CD14-positive monocyte (primary cell): ENCODE measurements at regions of chr2 and their contacts with region 1.

Region 1: GRCh38 chr2:55168221-55169154 is 63.6 kb downstream of the CLHC1 start:
- DNase-seq: peak; percentile 53 to 75 (median 68)
- H3K4me3 ChIP-seq: no peak overlapping the region
- H3K4me3 Mint-ChIP-seq: no peak overlapping the region
- H3K27ac ChIP-seq: peak overlapping the region in 1 of 2 donors; percentile 27
- H3K27ac Mint-ChIP-seq: no peak overlapping the region
- H3K4me1 ChIP-seq: peaks cover 8 to 10% of the 10 kb centered on the region in 2 donors
- H3K4me1 Mint-ChIP-seq: peaks cover 20% of the 10 kb centered on the region
- H3K27me3 ChIP-seq: no peaks in the 10 kb centered on the region
- H3K27me3 Mint-ChIP-seq: no peaks in the 10 kb centered on the region
- CTCF ChIP-seq: peak; percentile 81

Region 2: DNA sequence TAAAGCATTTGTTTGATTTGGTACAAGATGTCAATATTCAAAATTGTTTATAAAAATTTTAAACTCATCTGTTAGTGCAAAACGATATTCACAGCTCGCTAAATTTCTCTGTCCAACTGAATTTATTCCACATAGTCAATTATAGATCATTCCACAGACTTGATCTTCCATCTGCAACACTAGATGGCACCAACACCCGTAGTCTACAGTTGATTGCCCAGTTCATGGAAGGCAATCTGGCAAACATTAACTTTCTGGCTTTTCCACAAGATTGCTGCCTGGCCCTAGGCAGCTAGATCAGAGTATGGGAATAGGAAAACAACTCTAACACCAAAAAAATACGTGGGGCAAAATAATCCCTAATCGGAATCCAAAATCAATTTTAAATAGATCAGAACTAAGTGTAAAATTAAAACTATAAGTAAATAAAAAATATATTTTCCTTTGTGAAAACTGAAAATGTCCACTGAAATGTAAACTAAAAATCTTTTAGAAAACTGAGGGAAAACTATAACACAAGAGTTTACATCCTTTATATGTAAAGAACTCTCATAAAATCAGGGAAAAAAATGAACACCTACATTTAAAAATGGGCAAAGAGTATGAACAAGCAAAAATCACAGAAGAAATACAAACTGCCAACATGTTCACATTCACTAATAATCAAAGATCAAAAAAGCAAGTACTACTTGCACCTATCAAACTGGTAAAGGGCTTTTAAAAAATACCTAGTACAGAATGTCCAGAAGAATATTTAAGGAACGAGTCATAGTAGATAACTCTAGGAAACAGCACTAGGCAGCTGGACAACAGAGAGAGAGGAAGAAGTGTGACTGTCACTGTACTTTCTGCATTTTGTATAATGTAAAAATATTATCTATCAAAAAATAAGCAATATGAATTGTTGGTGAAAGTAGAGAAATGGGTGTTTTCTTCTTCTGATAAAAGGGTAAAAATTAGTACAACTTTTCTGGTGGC is 153.2 kb before region 1 on chr2:
- intact Hi-C with region 1: loop called in 1 of 2 experiments (anchors 5 kb)
- DNase-seq: peak; percentile 30 to 56 (median 54)
- H3K4me3 ChIP-seq: no peak overlapping the region
- H3K4me3 Mint-ChIP-seq: no peak overlapping the region
- H3K27ac ChIP-seq: no peak overlapping the region
- H3K27ac Mint-ChIP-seq: peak overlapping the region in 5 of 7 donors; percentile 27 to 75 (median 56)
- H3K4me1 ChIP-seq: peaks cover 45 to 61% of the 10 kb centered on the region in 2 donors
- H3K4me1 Mint-ChIP-seq: peaks cover 63% of the 10 kb centered on the region
- H3K27me3 ChIP-seq: no peaks in the 10 kb centered on the region
- H3K27me3 Mint-ChIP-seq: no peaks in the 10 kb centered on the region
- CTCF ChIP-seq: peak; percentile 68

Region 3: DNA sequence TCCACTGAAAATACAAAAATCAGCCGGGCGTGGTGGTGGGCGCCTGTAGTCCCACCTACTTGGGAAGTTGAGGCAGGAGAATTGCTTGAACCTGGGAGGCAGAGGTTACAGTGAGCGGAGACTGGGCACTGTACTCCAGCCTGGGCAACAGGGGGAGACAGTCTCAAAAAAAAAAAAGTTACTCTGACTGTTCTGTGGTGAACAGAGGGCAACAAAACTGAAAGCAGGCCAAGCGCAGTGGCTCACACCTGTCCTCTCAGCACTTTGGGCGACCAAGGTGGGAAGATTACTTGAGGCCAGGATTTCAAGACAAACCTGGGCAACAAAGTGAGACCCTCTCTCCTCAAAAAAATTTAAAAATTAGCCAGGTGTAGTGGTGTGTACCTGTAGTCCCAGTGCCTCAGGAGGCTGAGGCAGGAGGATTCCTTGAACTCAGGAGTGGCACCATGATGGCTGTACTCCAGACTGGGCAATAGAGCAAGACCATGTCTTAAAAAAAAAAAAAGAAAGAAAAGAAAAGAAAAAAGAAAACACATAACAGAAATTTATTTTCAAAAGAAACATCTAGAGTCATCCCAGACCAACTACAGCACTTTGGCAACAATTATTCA is 104.7 kb before region 1 on chr2:
- intact Hi-C with region 1: loop called in 1 of 2 experiments (anchors 10 kb)
- DNase-seq: no peak
- H3K4me3 ChIP-seq: no peak overlapping the region
- H3K4me3 Mint-ChIP-seq: no peak overlapping the region
- H3K27ac ChIP-seq: no peak overlapping the region
- H3K27ac Mint-ChIP-seq: peak overlapping the region in 1 of 7 donors; percentile 52
- H3K4me1 ChIP-seq: peaks cover 12 to 13% of the 10 kb centered on the region in 2 donors
- H3K4me1 Mint-ChIP-seq: peaks cover 13% of the 10 kb centered on the region
- H3K27me3 ChIP-seq: no peaks in the 10 kb centered on the region
- H3K27me3 Mint-ChIP-seq: no peaks in the 10 kb centered on the region
- CTCF ChIP-seq: no peak

Region 4: DNA sequence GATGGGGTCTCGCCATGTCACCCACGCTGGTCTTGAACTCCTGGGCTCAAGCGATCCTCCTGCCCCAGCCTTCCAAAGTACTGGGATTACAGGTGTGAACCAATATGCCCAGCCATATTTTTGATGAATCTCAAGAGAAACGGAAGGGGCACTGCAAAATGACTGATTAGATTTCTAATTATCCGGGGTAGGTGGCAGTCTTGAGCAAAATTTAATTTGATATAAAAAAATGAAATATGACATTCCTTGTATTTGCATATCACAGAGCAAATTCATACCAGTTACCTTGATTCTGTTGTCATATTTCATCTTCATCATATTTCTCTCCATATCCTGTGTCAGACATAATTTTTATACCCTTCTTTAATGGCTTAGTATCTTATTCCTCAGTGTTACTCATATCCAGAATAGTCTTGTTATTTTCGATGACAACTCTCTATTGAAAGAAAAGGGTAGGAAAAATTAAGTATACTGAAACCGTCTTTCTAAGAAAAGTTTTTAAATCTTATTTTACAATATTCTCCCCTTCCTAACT is 88.2 kb before region 1 on chr2:
- intact Hi-C with region 1: no loop called
- DNase-seq: no peak
- H3K4me3 ChIP-seq: no peak overlapping the region
- H3K4me3 Mint-ChIP-seq: no peak overlapping the region
- H3K27ac ChIP-seq: no peak overlapping the region
- H3K27ac Mint-ChIP-seq: no peak overlapping the region
- H3K4me1 ChIP-seq: peaks cover 19 to 24% of the 10 kb centered on the region in 2 donors
- H3K4me1 Mint-ChIP-seq: peaks cover 33% of the 10 kb centered on the region
- H3K27me3 ChIP-seq: no peaks in the 10 kb centered on the region
- H3K27me3 Mint-ChIP-seq: no peaks in the 10 kb centered on the region
- CTCF ChIP-seq: no peak

Region 5: GRCh38 chr2:55111570-55112228 is 56.8 kb before region 1 on chr2:
- intact Hi-C with region 1: loop called in 1 of 2 experiments (anchors 10 kb)
- DNase-seq: peak; percentile 91 to 97 (median 95)
- H3K4me3 ChIP-seq: peak overlapping the region in 1 of 3 experiments; percentile 54
- H3K4me3 Mint-ChIP-seq: peak overlapping the region; percentile 34 to 88
- H3K27ac ChIP-seq: peak overlapping the region; percentile 85 to 96
- H3K27ac Mint-ChIP-seq: peak overlapping the region; percentile 88 to 98 (median 94)
- H3K4me1 ChIP-seq: peaks cover 50 to 52% of the 10 kb centered on the region in 2 donors
- H3K4me1 Mint-ChIP-seq: peaks cover 49% of the 10 kb centered on the region
- H3K27me3 ChIP-seq: no peaks in the 10 kb centered on the region
- H3K27me3 Mint-ChIP-seq: peaks cover 0 to under 1% (median 0%) of the 10 kb centered on the region in 3 donors
- CTCF ChIP-seq: no peak

Region 6: DNA sequence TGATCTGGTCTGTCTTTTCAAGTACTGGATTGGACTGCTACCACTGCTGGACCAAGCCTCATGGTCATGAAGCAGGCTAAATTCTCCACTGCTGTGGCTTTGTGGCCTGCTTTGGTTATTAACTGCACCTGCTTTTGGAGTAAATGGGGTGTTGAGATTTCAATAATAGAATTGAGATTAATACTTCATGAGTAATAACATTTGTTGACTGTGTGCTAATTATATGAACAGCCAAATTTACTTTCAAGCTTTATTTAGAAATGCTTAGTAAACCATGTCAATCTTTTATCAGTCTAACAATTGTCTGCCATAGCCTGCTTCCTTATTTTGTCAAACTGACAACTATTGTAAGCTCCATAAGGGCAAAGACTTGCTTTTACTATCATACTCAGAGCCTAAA is 127.9 kb after region 1 on chr2:
- intact Hi-C with region 1: no loop called
- DNase-seq: no peak
- H3K4me3 ChIP-seq: no peak overlapping the region
- H3K4me3 Mint-ChIP-seq: no peak overlapping the region
- H3K27ac ChIP-seq: no peak overlapping the region
- H3K27ac Mint-ChIP-seq: peak overlapping the region in 2 of 7 donors; percentile 22 to 68
- H3K4me1 ChIP-seq: peaks cover 6 to 10% of the 10 kb centered on the region in 2 donors
- H3K4me1 Mint-ChIP-seq: peaks cover 13% of the 10 kb centered on the region
- H3K27me3 ChIP-seq: no peaks in the 10 kb centered on the region
- H3K27me3 Mint-ChIP-seq: no peaks in the 10 kb centered on the region
- CTCF ChIP-seq: no peak